CD4-positive, alpha-beta T cell (primary cell): ENCODE measurements at regions of chr14 and their contacts with region 1.

Region 1: GRCh38 chr14:96100161-96101029 is 61.2 kb downstream of the C14orf132 start:
- DNase-seq: peak; percentile 56 to 86 (median 68)
- ATAC-seq: peak; percentile 75
- H3K4me3 ChIP-seq: no peak overlapping the region
- H3K4me3 Mint-ChIP-seq: no peak overlapping the region
- H3K27ac ChIP-seq: no peak overlapping the region
- H3K27ac Mint-ChIP-seq: no peak overlapping the region
- H3K4me1 ChIP-seq: peaks cover 3% of the 10 kb centered on the region
- H3K4me1 Mint-ChIP-seq: peaks cover 7% of the 10 kb centered on the region
- H3K27me3 ChIP-seq: peaks cover 0 to 4% of the 10 kb centered on the region in 2 experiments
- H3K27me3 Mint-ChIP-seq: no peaks in the 10 kb centered on the region
- CTCF ChIP-seq: peak; percentile 85

Region 2: GRCh38 chr14:95311752-95312151 is 788.6 kb before region 1 on chr14:
- CTCF ChIA-PET with region 1: no interaction called
- POLR2A ChIA-PET with region 1: no interaction called
- intact Hi-C with region 1: no loop called
- DNase-seq: peak in 2 of 14 experiments; percentile 47 to 56
- ATAC-seq: no peak
- H3K4me3 ChIP-seq: no peak overlapping the region
- H3K4me3 Mint-ChIP-seq: no peak overlapping the region
- H3K27ac ChIP-seq: no peak overlapping the region
- H3K27ac Mint-ChIP-seq: no peak overlapping the region
- H3K4me1 ChIP-seq: peaks cover 3% of the 10 kb centered on the region
- H3K4me1 Mint-ChIP-seq: no peaks in the 10 kb centered on the region
- H3K27me3 ChIP-seq: peaks cover 2 to 4% of the 10 kb centered on the region in 2 experiments
- H3K27me3 Mint-ChIP-seq: peaks cover 13% of the 10 kb centered on the region
- CTCF ChIP-seq: no peak

Region 3: GRCh38 chr14:95741038-95741490 is 359.3 kb before region 1 on chr14:
- CTCF ChIA-PET with region 1: no interaction called
- POLR2A ChIA-PET with region 1: no interaction called
- intact Hi-C with region 1: no loop called
- DNase-seq: no peak
- ATAC-seq: no peak
- H3K4me3 ChIP-seq: no peak overlapping the region
- H3K4me3 Mint-ChIP-seq: no peak overlapping the region
- H3K27ac ChIP-seq: no peak overlapping the region
- H3K27ac Mint-ChIP-seq: no peak overlapping the region
- H3K4me1 ChIP-seq: peaks cover 8% of the 10 kb centered on the region
- H3K4me1 Mint-ChIP-seq: peaks cover 8% of the 10 kb centered on the region
- H3K27me3 ChIP-seq: peaks cover 0 to 10% of the 10 kb centered on the region in 2 experiments
- H3K27me3 Mint-ChIP-seq: peaks cover 12% of the 10 kb centered on the region
- CTCF ChIP-seq: no peak

Region 4: DNA sequence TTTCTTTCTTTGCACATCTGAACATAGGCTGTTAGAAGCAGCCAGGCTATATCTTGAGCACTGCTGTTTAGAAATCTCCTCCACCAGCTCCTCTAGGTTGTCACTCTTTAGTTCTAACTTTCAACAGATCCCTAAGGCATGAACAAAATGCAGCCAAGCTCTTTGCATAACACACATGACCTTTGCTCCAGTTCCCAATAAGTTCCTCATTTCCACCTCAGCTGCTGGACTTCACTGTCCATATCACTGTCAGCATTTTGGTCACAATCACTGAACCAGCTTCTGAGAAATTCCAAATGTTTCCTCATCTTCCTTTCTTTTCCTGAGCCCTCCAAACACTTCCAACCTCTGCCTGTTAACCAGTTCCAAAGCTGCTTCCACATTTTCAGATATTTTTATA is 88.8 kb before region 1 on chr14:
- CTCF ChIA-PET with region 1: no interaction called
- POLR2A ChIA-PET with region 1: no interaction called
- intact Hi-C with region 1: loop called in 1 of 2 experiments (anchors 5 kb)
- DNase-seq: no peak
- ATAC-seq: no peak
- H3K4me3 ChIP-seq: no peak overlapping the region
- H3K4me3 Mint-ChIP-seq: no peak overlapping the region
- H3K27ac ChIP-seq: no peak overlapping the region
- H3K27ac Mint-ChIP-seq: no peak overlapping the region
- H3K4me1 ChIP-seq: no peaks in the 10 kb centered on the region
- H3K4me1 Mint-ChIP-seq: no peaks in the 10 kb centered on the region
- H3K27me3 ChIP-seq: no peaks in the 10 kb centered on the region
- H3K27me3 Mint-ChIP-seq: peaks cover 27% of the 10 kb centered on the region
- CTCF ChIP-seq: no peak

Region 5: DNA sequence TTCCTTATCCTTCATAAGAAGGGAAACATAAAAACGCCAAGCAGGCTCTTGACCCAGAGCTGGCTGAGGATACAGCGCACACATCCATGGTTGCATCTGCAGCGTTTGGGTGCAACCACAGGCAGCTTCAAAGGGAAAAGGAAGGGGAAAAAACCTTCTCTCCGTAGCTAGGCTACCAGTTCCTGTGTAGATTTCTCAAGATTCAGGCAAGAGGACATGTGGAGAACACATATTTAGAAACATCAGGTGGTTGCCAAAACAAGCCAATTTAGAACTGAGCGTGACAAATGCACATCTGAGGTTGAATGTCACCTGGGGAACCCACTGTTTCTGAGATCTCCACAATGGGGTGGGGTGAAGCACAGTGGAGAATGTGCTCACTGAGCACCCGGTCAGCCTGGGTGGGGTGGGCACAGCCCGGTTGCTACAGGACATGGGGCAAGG is 26.0 kb after region 1 on chr14:
- CTCF ChIA-PET with region 1: interaction called, 4 read pairs
- POLR2A ChIA-PET with region 1: no interaction called
- intact Hi-C with region 1: loop called in 1 of 2 experiments (anchors 2 kb)
- DNase-seq: peak in 13 of 14 experiments; percentile 4 to 88 (median 41)
- ATAC-seq: peak; percentile 90
- H3K4me3 ChIP-seq: peak overlapping the region; percentile 21
- H3K4me3 Mint-ChIP-seq: peak overlapping the region; percentile 81
- H3K27ac ChIP-seq: peak overlapping the region; percentile 70 to 80
- H3K27ac Mint-ChIP-seq: peak overlapping the region; percentile 95
- H3K4me1 ChIP-seq: peaks cover 22% of the 10 kb centered on the region
- H3K4me1 Mint-ChIP-seq: peaks cover 53% of the 10 kb centered on the region
- H3K27me3 ChIP-seq: no peaks in the 10 kb centered on the region
- H3K27me3 Mint-ChIP-seq: no peaks in the 10 kb centered on the region
- CTCF ChIP-seq: no peak

Region 6: DNA sequence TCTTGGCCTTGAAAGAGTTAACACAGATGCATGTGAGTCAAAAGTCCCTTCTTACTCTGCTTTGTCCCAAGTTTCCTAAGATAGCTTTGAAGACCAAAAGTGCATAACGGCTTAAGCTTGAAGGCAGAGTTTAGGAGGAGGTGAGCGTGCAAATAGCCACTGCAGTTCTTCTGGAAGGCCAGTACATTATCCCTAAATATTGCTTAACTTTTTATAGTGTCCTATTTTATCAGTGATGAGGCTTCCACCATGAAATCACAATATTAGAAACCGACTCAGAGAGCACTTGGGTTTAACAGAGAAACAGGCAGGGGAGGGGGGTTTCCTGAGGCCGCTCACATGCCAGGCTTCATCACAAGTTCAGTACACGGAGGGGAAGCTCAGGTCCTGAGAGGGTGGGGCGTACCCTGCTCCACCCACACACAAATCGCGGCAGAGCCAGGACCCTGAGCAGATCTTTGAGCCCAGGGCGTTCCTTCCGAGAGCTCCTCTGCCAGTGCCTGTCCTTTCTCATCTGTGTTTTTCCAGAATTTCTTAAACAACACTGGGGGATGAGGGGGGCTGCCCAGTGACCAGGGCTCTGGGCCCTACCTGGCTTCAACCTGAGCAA is 77.5 kb after region 1 on chr14:
- CTCF ChIA-PET with region 1: no interaction called
- POLR2A ChIA-PET with region 1: no interaction called
- intact Hi-C with region 1: loop called in 1 of 2 experiments (anchors 2 kb)
- DNase-seq: peak in 7 of 14 experiments; percentile 3 to 66 (median 18)
- ATAC-seq: peak; percentile 76
- H3K4me3 ChIP-seq: no peak overlapping the region
- H3K4me3 Mint-ChIP-seq: no peak overlapping the region
- H3K27ac ChIP-seq: no peak overlapping the region
- H3K27ac Mint-ChIP-seq: no peak overlapping the region
- H3K4me1 ChIP-seq: no peaks in the 10 kb centered on the region
- H3K4me1 Mint-ChIP-seq: peaks cover 5% of the 10 kb centered on the region
- H3K27me3 ChIP-seq: no peaks in the 10 kb centered on the region
- H3K27me3 Mint-ChIP-seq: peaks cover 18% of the 10 kb centered on the region
- CTCF ChIP-seq: no peak

Region 7: GRCh38 chr14:96275177-96276112 is 175.1 kb after region 1 on chr14:
- CTCF ChIA-PET with region 1: interaction called, 15 read pairs
- POLR2A ChIA-PET with region 1: interaction called, 6 read pairs
- intact Hi-C with region 1: loop called (anchors 1 kb)
- DNase-seq: peak; percentile 47 to 84 (median 66)
- ATAC-seq: no peak
- H3K4me3 ChIP-seq: no peak overlapping the region
- H3K4me3 Mint-ChIP-seq: no peak overlapping the region
- H3K27ac ChIP-seq: no peak overlapping the region
- H3K27ac Mint-ChIP-seq: no peak overlapping the region
- H3K4me1 ChIP-seq: peaks cover 3% of the 10 kb centered on the region
- H3K4me1 Mint-ChIP-seq: no peaks in the 10 kb centered on the region
- H3K27me3 ChIP-seq: no peaks in the 10 kb centered on the region
- H3K27me3 Mint-ChIP-seq: no peaks in the 10 kb centered on the region
- CTCF ChIP-seq: peak; percentile 83

Region 8: DNA sequence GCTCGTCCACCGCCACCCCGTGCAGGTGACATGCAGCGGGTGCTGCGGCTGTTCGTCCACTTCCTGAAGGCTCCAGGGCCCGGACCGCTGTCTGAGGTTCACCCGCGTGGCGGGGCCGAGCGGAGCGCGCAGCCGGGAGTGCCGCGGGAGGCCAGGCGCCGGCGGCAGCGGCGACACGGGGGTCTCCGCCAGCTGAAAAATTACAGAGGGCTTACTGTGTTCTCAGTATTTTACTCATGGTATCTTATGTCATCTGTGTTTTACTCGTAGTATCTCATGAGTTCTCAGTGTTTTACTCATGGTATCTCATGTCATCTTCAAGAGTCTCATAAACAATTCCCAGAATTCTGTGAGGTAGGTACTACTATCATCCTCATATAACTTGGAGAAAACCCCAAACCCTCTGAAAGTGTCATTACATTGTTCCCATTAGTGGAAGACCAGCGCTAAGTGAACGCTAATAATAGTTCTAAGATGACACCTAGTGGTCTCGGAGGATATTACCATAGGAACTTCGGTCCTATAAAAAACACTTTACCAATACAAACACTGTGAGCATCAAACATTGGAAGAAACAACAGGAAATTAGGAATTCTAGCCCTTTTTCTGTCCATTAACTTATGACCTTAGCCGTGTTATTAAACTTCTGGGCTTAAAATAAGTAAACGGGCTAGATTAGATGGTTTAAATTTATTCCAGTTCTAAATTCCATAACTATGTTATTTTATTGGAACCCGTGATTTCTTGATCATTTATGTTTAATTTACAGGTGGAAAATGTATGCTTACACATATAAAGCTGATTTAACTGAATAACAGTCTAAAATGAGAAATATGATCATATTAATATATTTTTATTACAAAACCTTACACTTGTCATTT is 324.0 kb after region 1 on chr14:
- CTCF ChIA-PET with region 1: no interaction called
- POLR2A ChIA-PET with region 1: no interaction called
- intact Hi-C with region 1: loop called (anchors 1 kb)
- DNase-seq: peak in 7 of 14 experiments; percentile 1 to 78 (median 37)
- ATAC-seq: peak; percentile 78
- H3K4me3 ChIP-seq: peak overlapping the region; percentile 42
- H3K4me3 Mint-ChIP-seq: peak overlapping the region; percentile 77
- H3K27ac ChIP-seq: no peak overlapping the region
- H3K27ac Mint-ChIP-seq: no peak overlapping the region
- H3K4me1 ChIP-seq: peaks cover 8% of the 10 kb centered on the region
- H3K4me1 Mint-ChIP-seq: no peaks in the 10 kb centered on the region
- H3K27me3 ChIP-seq: no peaks in the 10 kb centered on the region
- H3K27me3 Mint-ChIP-seq: peaks cover 12% of the 10 kb centered on the region
- CTCF ChIP-seq: peak; percentile 92